Heart right ventricle (tissue), 16 donors: ENCODE measurements at regions of chr12 and their contacts with region 1.

Region 1: GRCh38 chr12:113271853-113272561 is 50.7 kb downstream of the TPCN1 start:
- DNase-seq: peak; percentile 74 to 85
- ATAC-seq: peak; percentile 78 to 94 (median 90)
- H3K4me3 ChIP-seq: peak overlapping the region in 2 of 10 donors; percentile 2 to 11
- H3K27ac ChIP-seq: peak overlapping the region; percentile 46 to 92 (median 84)
- H3K4me1 ChIP-seq: peaks cover 11 to 46% (median 40%) of the 10 kb centered on the region in 9 donors
- H3K27me3 ChIP-seq: no peaks in the 10 kb centered on the region
- CTCF ChIP-seq: no peak

Region 2: DNA sequence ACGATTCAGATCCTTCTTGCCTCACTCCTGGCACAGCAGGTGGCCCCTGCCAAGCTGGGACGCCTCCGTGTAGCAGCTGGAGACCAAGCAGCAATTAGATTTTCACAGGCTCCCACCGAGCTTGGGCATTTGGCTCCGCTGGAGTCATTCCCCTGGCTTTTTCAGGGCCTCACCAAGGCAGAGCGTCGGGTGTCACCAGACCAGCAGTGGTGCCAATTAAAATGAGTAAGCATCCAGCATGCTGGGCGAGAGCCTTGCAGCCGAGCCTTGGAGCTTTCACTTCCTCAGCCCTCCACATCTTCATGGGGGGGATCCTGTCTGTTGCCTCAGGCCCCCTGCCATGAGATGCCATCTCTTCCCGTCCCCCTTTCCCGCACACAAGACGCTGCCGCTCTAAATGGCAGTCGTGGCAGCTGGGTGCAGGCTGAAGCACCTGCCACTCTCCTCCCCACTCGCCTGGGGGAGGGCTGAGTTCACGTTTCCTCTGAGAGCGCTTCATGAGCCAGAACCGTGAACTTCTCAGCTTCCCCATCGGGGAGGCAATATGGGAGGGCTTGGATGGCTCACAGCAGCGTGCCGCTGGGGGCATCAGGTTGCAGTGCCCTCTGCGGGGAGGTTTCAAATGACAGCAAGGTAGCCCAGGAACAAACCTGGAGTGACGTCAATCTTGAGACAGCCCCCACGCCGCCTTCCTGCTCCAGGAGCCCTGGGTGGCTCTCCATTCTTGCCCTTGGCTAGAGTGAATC is 39.0 kb before region 1 on chr12:
- intact Hi-C with region 1: loop called in 1 of 10 experiments (anchors 5 kb)
- DNase-seq: peak; percentile 39 to 57
- ATAC-seq: peak; percentile 55 to 71 (median 62)
- H3K4me3 ChIP-seq: peak overlapping the region in 1 of 10 donors; percentile 33
- H3K27ac ChIP-seq: peak overlapping the region; percentile 74 to 98 (median 87)
- H3K4me1 ChIP-seq: peaks cover 52 to 99% (median 95%) of the 10 kb centered on the region in 9 donors
- H3K27me3 ChIP-seq: no peaks in the 10 kb centered on the region
- CTCF ChIP-seq: peak in 1 of 9 donors; percentile 16

Region 3: DNA sequence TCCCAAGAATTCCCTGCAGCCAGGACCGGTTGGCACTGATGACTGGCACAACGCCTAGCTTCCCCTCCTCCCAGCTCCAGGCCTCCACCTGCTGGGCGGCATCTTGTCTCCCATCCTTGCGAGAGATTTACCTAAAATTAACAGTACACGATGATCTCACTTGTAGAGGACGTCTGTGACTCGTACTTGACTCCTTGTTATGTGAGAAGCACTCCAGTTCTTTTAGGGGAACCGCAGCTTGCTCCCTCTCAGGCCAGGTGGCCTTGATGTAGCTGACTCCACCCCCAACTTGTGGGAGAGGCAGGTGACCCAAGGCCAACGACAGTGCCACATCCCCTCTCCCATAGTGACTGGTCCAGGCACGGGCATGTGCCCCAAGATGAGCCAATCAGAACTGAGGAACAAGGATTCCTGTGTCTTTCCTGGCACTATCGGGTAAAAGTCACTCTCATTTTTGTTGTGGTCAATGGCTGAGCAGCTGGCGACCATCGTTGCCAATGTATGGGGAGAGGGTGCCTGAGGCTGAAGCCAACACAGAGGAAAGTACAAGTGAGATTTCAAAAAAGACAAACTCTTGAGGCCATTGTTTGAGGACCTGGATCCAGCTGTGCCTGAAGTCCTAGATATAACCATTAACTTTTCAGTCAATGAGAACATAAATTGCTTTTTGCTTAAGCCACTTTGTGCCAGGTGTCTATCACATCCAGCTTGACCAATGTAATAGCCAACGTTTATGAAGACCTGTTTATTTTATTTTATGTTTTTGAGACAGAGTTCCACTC is 485.4 kb after region 1 on chr12:
- intact Hi-C with region 1: no loop called
- DNase-seq: no peak
- ATAC-seq: no peak
- H3K4me3 ChIP-seq: no peak overlapping the region
- H3K27ac ChIP-seq: no peak overlapping the region
- H3K4me1 ChIP-seq: no peaks in the 10 kb centered on the region
- H3K27me3 ChIP-seq: peaks cover 0 to 75% (median 60%) of the 10 kb centered on the region in 7 donors
- CTCF ChIP-seq: no peak